ENCODE measurements at regions of chr14 and their contacts with region 1.

Region 1: DNA sequence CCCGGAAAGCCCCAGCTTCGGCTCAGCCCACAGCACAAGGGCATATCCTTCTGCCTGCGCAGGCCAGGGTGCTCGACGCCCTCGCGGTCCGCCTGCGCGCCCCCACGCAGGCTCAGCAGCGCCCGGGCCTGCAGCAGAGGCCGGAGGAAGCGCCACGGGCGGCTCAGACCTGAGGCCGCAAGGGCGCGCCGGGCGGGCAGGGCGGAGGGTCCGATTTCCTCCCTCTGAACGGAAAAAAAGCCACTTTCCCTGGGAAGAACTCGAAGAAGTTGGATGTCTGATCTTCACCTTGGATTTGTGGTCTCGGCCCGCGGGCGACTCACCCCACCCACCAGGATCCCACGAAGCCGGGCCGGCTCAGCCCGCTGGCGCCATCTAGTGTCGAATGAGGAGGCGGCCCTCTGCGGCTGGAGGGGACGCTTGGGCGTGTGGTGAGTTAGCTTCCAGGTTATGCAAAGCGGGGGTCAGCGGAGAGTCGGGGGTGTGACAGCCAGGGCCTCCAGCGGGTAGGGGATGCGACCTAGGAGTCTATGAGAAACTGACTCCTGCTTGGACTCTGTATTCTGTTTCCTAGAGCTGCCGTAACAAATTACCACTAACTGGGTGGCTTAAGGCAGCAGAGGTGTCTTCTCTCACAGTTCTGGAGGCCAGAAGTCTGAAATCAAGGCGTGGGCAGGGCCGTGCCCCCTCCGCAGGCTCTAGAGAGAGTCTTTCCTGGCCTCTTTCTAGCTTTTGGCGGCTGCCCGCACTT is 40.0 kb upstream of the SRSF5 start:
- DNase-seq: peak; percentile 82
- H3K4me3 Mint-ChIP-seq: peak overlapping the region; percentile 38
- H3K27ac Mint-ChIP-seq: no peak overlapping the region
- H3K4me1 Mint-ChIP-seq: peaks cover 12% of the 10 kb centered on the region
- H3K27me3 Mint-ChIP-seq: peaks cover 4% of the 10 kb centered on the region

Region 2: DNA sequence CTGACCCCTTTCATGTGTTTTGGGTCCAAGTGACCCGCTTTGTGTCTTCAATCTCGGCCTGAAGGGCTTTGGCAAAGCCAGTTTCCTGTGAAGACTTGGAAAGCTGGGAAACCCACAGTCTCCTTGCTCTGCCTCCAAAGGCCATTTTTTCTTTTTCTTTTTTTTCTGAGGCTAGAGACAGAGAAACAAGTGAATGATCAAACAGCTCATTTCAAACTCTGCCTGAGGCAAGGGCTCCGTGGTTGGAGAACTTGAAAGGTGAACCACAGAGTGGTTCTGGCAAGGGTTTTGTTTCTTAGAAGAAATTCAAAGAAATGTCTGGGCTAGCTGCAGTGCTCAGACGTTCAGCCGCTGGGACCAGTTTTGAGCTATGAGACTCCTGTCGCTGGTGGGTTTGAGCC is 391.6 kb before region 1 on chr14:
- CTCF ChIA-PET with region 1: no interaction called
- intact Hi-C with region 1: no loop called
- DNase-seq: no peak
- H3K4me3 Mint-ChIP-seq: no peak overlapping the region
- H3K27ac Mint-ChIP-seq: no peak overlapping the region
- H3K4me1 Mint-ChIP-seq: peaks cover 3% of the 10 kb centered on the region
- H3K27me3 Mint-ChIP-seq: no peaks in the 10 kb centered on the region

Region 3: DNA sequence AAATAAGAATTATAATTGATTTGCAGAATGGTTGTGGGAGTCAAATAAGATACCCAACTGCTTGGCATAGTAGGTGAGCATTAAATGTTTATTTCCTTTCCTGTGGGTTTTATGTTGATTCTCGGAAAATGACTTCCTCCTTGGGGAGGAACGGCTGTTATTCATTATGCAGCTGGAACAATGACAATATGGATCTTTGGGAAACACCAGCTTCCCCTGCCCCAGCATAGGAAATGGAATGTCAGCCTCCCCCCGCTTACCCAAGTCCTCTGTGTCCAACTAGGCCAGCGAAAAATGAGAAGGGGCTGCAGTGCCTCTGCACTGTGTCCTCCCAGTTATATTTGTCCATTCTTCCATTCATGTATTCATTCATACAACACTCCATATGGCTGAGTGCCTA is 140.5 kb before region 1 on chr14:
- CTCF ChIA-PET with region 1: interaction called, 68 read pairs
- intact Hi-C with region 1: loop called (anchors 1 kb)
- DNase-seq: no peak
- H3K4me3 Mint-ChIP-seq: no peak overlapping the region
- H3K27ac Mint-ChIP-seq: no peak overlapping the region
- H3K4me1 Mint-ChIP-seq: no peaks in the 10 kb centered on the region
- H3K27me3 Mint-ChIP-seq: no peaks in the 10 kb centered on the region

Region 4: GRCh38 chr14:69600304-69600891 is 126.5 kb before region 1 on chr14:
- CTCF ChIA-PET with region 1: interaction called, 62 read pairs
- intact Hi-C with region 1: loop called (anchors 1 kb)
- DNase-seq: no peak
- H3K4me3 Mint-ChIP-seq: no peak overlapping the region
- H3K27ac Mint-ChIP-seq: no peak overlapping the region
- H3K4me1 Mint-ChIP-seq: peaks cover 5% of the 10 kb centered on the region
- H3K27me3 Mint-ChIP-seq: no peaks in the 10 kb centered on the region

Region 5: DNA sequence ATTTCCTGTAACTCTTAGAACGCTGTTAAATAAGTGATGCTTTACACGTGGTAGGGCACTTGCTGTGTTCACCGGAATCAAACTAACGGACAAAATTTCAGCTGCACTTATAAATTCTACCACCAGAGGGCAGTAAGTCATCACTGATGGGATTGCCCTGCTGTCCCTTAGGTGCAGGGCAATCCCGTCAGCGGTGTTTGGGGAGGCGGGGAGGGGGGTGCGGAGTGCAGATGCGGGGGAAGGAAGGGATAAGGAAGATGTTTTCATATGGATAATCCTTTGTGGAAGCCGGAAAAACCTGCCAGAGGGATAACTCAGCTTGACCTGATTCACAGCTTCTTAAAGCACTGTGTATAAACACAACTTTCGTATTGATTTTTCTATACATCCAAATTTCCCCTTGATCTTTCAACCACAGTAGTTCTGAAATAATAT is 91.8 kb after region 1 on chr14:
- CTCF ChIA-PET with region 1: interaction called, 7 read pairs
- intact Hi-C with region 1: loop called (anchors 5 kb)
- DNase-seq: peak; percentile 67
- H3K4me3 Mint-ChIP-seq: no peak overlapping the region
- H3K27ac Mint-ChIP-seq: no peak overlapping the region
- H3K4me1 Mint-ChIP-seq: peaks cover 2% of the 10 kb centered on the region
- H3K27me3 Mint-ChIP-seq: peaks cover 2% of the 10 kb centered on the region

Region 6: GRCh38 chr14:70073924-70074566 is 347.1 kb after region 1 on chr14:
- CTCF ChIA-PET with region 1: no interaction called
- intact Hi-C with region 1: loop called (anchors 1 kb)
- DNase-seq: peak; percentile 81
- H3K4me3 Mint-ChIP-seq: no peak overlapping the region
- H3K27ac Mint-ChIP-seq: no peak overlapping the region
- H3K4me1 Mint-ChIP-seq: no peaks in the 10 kb centered on the region
- H3K27me3 Mint-ChIP-seq: peaks cover 2% of the 10 kb centered on the region